Activated B cell treated with CpG ODN at 0.5 μM for 24 hours (primary cell): ENCODE measurements at regions of chr2 and their contacts with region 1.

Region 1: DNA sequence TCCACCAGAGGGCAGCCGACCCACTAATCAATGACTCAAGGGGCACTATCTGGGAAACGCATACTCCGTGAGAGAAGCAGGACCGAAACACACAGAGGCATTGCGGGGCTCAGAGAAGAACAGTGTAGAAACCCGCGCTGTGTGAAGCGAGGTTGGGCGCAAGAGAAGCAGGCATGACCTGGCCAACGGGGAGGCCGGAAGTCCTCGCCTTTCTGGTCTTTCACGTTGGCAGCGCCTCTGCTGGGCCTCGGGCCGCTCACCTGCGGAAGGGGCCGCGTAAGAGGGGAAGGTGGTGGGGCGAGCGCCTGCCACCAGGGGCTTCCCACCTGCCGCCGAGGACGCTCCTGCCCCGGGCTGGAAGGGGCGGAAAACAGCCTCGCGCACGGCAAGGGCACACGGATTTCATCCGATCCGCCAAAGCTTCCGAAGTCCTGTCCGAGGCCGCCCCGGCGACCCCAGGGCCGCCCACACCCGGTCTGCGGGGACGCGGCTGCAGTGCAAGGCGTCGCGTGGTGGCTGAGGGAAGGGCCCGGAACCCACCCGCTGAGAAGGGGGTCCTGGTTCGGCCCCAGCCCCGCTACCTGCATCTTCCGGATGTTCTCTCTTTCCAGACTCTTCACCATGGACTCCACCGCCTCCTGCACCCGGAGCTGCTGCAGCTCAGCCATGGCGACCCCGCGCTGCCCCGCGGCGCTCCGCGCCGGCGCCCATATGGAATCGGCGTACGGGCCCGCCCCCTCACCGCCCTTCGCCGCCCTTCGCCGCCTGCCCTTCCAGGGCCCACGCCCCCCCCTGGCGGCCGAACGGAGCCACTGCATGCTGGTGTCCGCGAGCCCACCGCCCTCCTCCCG is at the start of gene FAM136A:
- DNase-seq: peak; percentile 90
- ATAC-seq: peak; percentile 92
- H3K4me3 Mint-ChIP-seq: peak within 1 kb of the TSS; percentile 90
- H3K27ac Mint-ChIP-seq: peak within 1 kb of the TSS; percentile 95
- H3K4me1 Mint-ChIP-seq: peaks cover 22% of the 10 kb centered on the region
- H3K27me3 Mint-ChIP-seq: no peaks in the 10 kb centered on the region
- CTCF ChIP-seq: no peak
- total RNA-seq, gene FAM136A: 38.9 and 41.0 TPM in 2 replicates

Region 2: DNA sequence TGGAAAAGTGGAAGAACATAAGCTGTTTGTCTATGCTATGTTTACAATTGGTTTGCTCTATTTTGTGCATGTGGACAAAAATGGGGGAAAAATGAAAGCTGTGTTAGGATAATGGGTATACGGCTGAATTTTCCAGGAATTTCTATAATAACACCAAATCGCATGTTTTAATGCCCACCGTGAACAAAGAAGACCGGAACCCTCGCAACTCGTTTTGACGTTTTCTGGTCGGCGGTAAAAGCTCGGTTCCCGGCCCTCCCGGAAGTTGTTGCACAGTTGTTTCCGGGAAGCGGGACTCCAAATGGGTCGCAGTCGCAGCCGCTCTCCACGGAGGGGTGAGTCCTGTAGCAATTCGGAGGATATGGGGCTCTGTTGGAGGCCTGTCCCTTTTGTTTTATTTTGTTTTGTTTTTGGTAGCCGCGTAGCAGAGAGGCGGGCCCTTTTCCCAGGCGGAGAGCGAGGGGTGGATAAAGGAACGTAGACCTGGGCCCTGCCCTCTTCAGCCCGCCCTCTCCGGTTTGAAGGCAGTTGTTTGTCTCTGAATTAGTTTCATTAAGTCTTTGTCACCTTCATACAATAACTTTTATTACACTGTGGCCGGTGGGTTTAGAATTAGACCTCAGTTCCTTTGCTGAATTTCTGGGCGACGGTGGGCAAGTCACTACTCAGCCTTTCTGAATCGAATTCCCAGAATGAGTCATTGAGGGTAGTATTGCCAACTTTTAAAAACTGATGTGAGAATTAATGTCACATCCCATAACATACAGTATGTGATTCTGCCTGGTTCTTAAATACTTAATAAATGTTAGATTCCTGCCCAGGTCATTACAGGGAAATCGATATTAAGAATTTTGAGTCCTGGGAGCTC is 407.7 kb before region 1 on chr2 and contains the start of gene SNRNP27:
- CTCF ChIA-PET with region 1: no interaction called
- POLR2A ChIA-PET with region 1: no interaction called
- intact Hi-C with region 1: loop called (anchors 5 kb)
- DNase-seq: peak; percentile 69
- ATAC-seq: peak; percentile 88
- H3K4me3 Mint-ChIP-seq: peak within 1 kb of the TSS; percentile 100
- H3K27ac Mint-ChIP-seq: peak within 1 kb of the TSS; percentile 98
- H3K4me1 Mint-ChIP-seq: peaks cover 43% of the 10 kb centered on the region
- H3K27me3 Mint-ChIP-seq: no peaks in the 10 kb centered on the region
- CTCF ChIP-seq: no peak
- total RNA-seq, gene SNRNP27: 43.0 and 49.1 TPM in 2 replicates

Region 3: GRCh38 chr2:70248181-70248847 is 53.3 kb before region 1 on chr2 and contains the start of gene TIA1:
- CTCF ChIA-PET with region 1: no interaction called
- POLR2A ChIA-PET with region 1: no interaction called
- intact Hi-C with region 1: loop called (anchors 2 kb)
- DNase-seq: peak; percentile 93
- ATAC-seq: peak; percentile 96
- H3K4me3 Mint-ChIP-seq: peak within 1 kb of the TSS; percentile 99
- H3K27ac Mint-ChIP-seq: peak within 1 kb of the TSS; percentile 99
- H3K4me1 Mint-ChIP-seq: peaks cover 44% of the 10 kb centered on the region
- H3K27me3 Mint-ChIP-seq: peaks cover 4% of the 10 kb centered on the region
- CTCF ChIP-seq: no peak
- total RNA-seq, gene TIA1: 129 and 149 TPM in 2 replicates

Region 4: GRCh38 chr2:70480468-70480867 is 178.9 kb after region 1 on chr2:
- CTCF ChIA-PET with region 1: no interaction called
- POLR2A ChIA-PET with region 1: interaction called, 14 read pairs
- intact Hi-C with region 1: no loop called
- DNase-seq: no peak
- ATAC-seq: peak; percentile 79
- H3K4me3 Mint-ChIP-seq: peak overlapping the region; percentile 6
- H3K27ac Mint-ChIP-seq: peak overlapping the region; percentile 54
- H3K4me1 Mint-ChIP-seq: peaks cover 34% of the 10 kb centered on the region
- H3K27me3 Mint-ChIP-seq: no peaks in the 10 kb centered on the region
- CTCF ChIP-seq: no peak

Region 5: GRCh38 chr2:70767699-70768589 is 466.4 kb after region 1 on chr2 and contains the start of gene ADD2:
- CTCF ChIA-PET with region 1: no interaction called
- POLR2A ChIA-PET with region 1: no interaction called
- intact Hi-C with region 1: loop called (anchors 5 kb)
- DNase-seq: peak; percentile 53
- ATAC-seq: peak; percentile 69
- H3K4me3 Mint-ChIP-seq: peak within 1 kb of the TSS; percentile 90
- H3K27ac Mint-ChIP-seq: peak within 1 kb of the TSS; percentile 85
- H3K4me1 Mint-ChIP-seq: peaks cover 24% of the 10 kb centered on the region
- H3K27me3 Mint-ChIP-seq: peaks cover 16% of the 10 kb centered on the region
- CTCF ChIP-seq: no peak
- total RNA-seq, gene ADD2: 12.5 and 15.4 TPM in 2 replicates

Region 6: GRCh38 chr2:70948337-70949003 is 646.9 kb after region 1 on chr2:
- CTCF ChIA-PET with region 1: interaction called, 19 read pairs
- POLR2A ChIA-PET with region 1: no interaction called
- intact Hi-C with region 1: loop called (anchors 1 kb)
- DNase-seq: peak; percentile 66
- ATAC-seq: peak; percentile 99
- H3K4me3 Mint-ChIP-seq: peak overlapping the region; percentile 77
- H3K27ac Mint-ChIP-seq: peak overlapping the region; percentile 4
- H3K4me1 Mint-ChIP-seq: peaks cover 12% of the 10 kb centered on the region
- H3K27me3 Mint-ChIP-seq: peaks cover 20% of the 10 kb centered on the region
- CTCF ChIP-seq: peak; percentile 73